ENCODE measurements at regions of chr10 and their contacts with region 1.

Region 1: DNA sequence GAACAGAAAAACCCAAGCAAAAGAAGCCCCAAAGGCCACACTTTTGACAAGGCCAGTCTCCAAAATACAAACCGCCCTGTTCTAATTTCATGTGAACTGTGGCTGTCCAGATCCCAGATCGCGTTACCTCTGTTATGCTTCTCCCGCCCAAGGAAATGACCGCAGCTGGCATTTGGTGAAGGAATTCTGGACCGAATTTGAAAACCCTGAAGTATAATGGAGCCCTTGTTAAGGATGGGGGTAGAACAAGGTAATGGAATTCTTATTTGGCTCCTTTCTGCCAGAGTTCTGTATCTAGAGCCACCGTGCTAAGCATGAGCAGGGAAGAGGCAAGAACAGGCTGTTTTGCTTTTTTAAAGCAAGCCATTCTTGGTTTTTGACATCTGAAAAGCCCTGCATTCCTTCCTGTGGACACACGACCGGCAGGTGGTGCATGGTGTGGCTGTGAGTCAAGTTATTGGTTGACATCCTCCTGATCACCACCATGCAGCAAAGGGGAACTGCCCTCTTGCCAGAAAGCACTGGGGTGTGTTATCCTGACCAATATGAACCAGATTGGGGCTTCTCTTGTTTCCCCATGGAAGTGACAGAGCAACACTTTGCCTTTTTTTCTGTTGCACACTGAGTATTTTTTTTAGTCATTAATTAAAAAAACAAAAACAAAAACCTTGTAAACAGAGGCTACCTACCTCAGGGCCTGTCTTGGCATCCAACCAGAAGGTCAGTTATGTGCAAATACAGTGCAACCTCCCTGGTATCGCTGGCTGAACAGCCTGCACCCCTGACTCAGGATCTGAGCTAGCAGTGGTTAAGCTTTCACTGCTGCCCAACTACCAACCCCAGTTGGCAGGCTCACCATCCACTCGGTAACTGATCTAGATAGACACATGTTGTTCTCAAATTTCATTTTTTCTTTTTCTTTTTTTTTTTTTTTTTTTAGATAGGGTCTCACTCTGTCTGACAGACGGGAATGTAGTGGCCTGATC is 14.2 kb downstream of the UCMA start:
- DNase-seq: peak; percentile 74
- ATAC-seq: peak; percentile 94
- H3K4me3 ChIP-seq: peak overlapping the region in 3 of 4 donors; percentile 4 to 9 (median 4)
- H3K27ac ChIP-seq: peak overlapping the region; percentile 65 to 84 (median 78)
- H3K4me1 ChIP-seq: peaks cover 20 to 23% of the 10 kb centered on the region in 2 donors
- H3K27me3 ChIP-seq: no peaks in the 10 kb centered on the region
- CTCF ChIP-seq: peak in 2 of 5 experiments; percentile 11 to 20
- POLR2A ChIP-seq: no peak

Region 2: DNA sequence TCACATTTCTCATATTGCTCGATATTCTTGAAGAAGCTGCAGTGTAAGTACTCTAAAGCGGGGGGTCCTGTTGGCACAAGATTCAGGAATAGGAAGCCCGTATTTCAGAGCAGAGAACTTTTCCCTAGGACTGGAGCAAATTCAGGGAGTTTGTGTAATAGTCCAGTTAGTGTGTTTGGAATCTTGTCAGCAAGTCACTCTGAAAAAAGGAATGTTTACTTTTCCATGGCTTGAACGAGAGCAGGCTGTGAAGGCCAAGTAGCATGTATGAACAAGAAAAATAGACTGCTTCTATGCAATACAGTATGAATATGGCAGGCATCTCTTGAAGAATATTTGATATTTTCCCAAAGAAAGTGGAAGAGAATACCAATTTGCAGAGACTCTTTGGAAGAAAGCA is 984.2 kb before region 1 on chr10:
- in situ Hi-C with region 1: no loop called
- intact Hi-C with region 1: no loop called
- DNase-seq: no peak
- ATAC-seq: no peak
- H3K4me3 ChIP-seq: no peak overlapping the region
- H3K27ac ChIP-seq: no peak overlapping the region
- H3K4me1 ChIP-seq: no peaks in the 10 kb centered on the region
- H3K27me3 ChIP-seq: no peaks in the 10 kb centered on the region
- CTCF ChIP-seq: no peak
- POLR2A ChIP-seq: no peak

Region 3: GRCh38 chr10:13271552-13272163 is 51.7 kb after region 1 on chr10:
- in situ Hi-C with region 1: no loop called
- intact Hi-C with region 1: loop called (anchors 2 kb)
- DNase-seq: peak; percentile 5 to 45
- ATAC-seq: peak; percentile 25 to 52
- H3K4me3 ChIP-seq: peak overlapping the region in 3 of 4 donors; percentile 18 to 30 (median 20)
- H3K27ac ChIP-seq: peak overlapping the region; percentile 57 to 73 (median 66)
- H3K4me1 ChIP-seq: peaks cover 16% of the 10 kb centered on the region in 2 donors
- H3K27me3 ChIP-seq: no peaks in the 10 kb centered on the region
- CTCF ChIP-seq: peak in 3 of 5 experiments; percentile 26 to 52 (median 41)
- POLR2A ChIP-seq: no peak

Measured in gastrocnemius medialis (tissue), 4 donors.